ENCODE measurements at regions of chr11 and their contacts with region 1.

Region 1: GRCh38 chr11:3341298-3341697 is 37.6 kb downstream of the ZNF195 start:
- DNase-seq: peak; percentile 40
- H3K4me3 ChIP-seq: no peak overlapping the region
- H3K27ac ChIP-seq: no peak overlapping the region
- H3K4me1 ChIP-seq: no peaks in the 10 kb centered on the region
- H3K27me3 ChIP-seq: peaks cover 2% of the 10 kb centered on the region
- CTCF ChIP-seq: peak; percentile 38 to 74 (median 68)
- POLR2A ChIP-seq: no peak

Region 2: DNA sequence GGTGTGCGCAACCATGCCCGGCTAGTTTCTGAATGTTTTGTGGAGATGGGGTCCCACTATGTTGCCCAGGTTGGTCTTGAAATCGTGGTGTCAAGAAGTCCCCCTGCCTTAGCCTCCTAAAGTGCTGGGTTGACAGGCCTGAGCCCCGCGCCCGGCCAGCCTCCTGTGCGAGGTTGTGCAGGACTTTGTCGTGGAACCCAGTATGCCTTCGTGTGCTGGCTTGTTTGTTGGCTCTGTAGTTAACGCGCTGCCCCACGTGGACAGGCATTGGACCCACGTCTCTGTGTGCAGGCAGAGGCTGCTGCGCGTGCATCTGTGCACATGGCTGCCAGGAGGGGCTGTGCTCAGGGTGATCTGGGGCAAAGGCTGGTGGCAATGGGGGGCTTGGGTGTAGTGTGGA is 71.5 kb after region 1 on chr11:
- intact Hi-C with region 1: loop called (anchors 10 kb)
- DNase-seq: no peak
- H3K4me3 ChIP-seq: no peak overlapping the region
- H3K27ac ChIP-seq: no peak overlapping the region
- H3K4me1 ChIP-seq: no peaks in the 10 kb centered on the region
- H3K27me3 ChIP-seq: no peaks in the 10 kb centered on the region
- CTCF ChIP-seq: no peak
- POLR2A ChIP-seq: no peak

Measured in prostate gland (tissue), 2 donors.